ENCODE measurements at regions of chr1 and their contacts with region 1.

Region 1: GRCh38 chr1:8992936-8993687 is 33.1 kb downstream of the SLC2A7 start:
- DNase-seq: no peak
- CTCF ChIP-seq: no peak

Region 2: DNA sequence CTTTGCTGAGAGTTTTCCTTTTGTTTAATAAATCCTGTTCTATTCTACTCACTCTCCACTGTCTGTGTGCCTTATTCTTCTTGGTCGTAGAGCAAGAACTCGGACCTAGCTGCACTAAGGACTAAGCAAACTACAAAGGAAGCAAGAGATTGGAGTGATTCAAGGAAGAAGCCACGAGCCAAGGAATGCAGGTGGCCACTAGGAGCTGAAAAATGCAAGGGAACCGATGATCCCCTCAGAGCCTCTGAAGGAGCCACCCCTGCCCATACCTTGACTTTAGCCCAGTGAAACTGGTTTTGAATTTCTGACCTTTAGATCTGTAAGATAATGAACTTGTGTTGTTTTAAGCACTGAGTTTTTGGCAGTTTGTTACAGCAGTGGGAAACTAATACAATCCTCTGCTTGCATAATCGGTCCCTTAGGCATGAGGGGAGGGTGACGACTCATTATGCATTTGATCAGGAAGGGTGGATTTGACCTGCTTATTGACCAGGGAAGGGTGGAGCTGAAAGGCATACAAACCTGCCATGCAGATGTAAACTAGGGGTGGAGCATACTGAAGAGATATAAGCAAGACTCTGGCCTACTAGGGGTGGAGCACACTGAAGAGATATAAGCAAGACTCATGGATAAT is 53.6 kb before region 1 on chr1:
- in situ Hi-C with region 1: loop called (anchors 10 kb)
- DNase-seq: no peak
- CTCF ChIP-seq: no peak

Measured in GM13976 (cell line).